ENCODE measurements at regions of chr11 and their contacts with region 1.

Region 1: GRCh38 chr11:86456052-86456939 is 81.6 kb downstream of the CCDC81 start:
- DNase-seq: peak; percentile 87
- H3K4me3 ChIP-seq: no peak overlapping the region
- H3K27ac ChIP-seq: peak overlapping the region in 1 of 2 donors; percentile 37
- H3K4me1 ChIP-seq: no peaks in the 10 kb centered on the region
- H3K27me3 ChIP-seq: no peaks in the 10 kb centered on the region
- CTCF ChIP-seq: peak; percentile 70 to 92 (median 86)
- POLR2A ChIP-seq: no peak

Region 2: DNA sequence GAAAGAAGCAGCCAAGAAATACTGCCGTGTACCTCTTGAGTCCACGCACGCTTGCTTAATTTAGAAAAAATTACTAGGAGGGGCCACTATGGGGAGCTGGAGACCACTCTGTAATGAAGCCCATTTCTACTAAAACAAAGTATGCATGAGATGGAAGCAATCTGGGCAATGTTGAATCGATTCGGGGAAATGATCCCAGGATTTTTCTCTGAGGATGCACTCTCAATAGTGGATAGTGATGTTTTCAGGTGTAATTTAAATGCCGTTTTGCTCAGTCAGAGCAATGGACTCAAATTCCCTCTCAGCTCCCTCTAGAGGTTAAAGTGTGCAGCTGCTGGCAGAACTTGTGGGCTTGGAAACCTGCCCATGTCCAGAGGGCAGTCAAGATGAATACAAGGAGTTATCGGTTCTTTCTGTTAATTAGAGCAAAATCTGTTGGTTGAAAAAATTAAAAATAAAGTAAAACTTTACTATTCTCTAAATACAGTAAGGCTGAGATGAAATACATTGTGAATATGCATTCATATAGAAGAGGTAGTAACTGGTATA is 152.0 kb after region 1 on chr11:
- intact Hi-C with region 1: loop called (anchors 5 kb)
- DNase-seq: peak; percentile 49
- H3K4me3 ChIP-seq: no peak overlapping the region
- H3K27ac ChIP-seq: no peak overlapping the region
- H3K4me1 ChIP-seq: no peaks in the 10 kb centered on the region
- H3K27me3 ChIP-seq: no peaks in the 10 kb centered on the region
- CTCF ChIP-seq: peak; percentile 76 to 84 (median 78)
- POLR2A ChIP-seq: no peak

Region 3: DNA sequence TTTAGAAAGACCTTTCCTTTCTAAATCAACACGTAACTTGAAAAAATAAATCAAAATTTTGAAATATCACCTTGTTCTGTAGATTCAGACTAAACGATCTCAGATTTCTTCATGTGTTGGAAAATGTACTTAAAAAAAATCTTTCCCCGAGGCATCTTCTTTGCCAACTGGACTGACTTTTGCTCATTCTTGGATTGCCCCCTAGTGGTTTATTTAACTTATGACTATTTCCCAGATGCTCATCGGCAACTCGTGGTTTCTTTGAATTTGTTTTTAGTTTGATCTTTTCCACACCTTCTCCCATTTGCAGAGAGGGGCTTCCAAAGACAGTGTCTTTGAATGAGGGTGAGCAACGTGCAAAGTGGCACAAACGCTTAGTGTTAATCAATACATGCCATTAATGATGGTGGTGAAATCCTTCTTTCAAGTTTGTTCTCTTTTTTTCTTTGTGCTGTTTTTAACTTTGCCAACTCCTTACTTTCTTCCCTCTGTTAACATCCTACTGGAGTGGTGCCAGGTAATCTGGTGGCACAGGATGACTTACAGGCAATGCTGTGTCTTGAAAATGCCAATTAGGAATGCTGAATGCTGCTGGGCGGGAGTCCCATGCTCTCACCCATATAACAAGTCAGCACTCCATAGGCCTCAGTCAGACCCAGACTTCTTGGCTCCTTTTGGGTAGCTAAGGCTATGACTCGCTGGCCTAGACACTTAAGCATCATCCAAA is 362.3 kb after region 1 on chr11:
- intact Hi-C with region 1: loop called (anchors 1 kb)
- DNase-seq: peak; percentile 31
- H3K4me3 ChIP-seq: no peak overlapping the region
- H3K27ac ChIP-seq: no peak overlapping the region
- H3K4me1 ChIP-seq: no peaks in the 10 kb centered on the region
- H3K27me3 ChIP-seq: no peaks in the 10 kb centered on the region
- CTCF ChIP-seq: peak; percentile 62 to 88 (median 83)
- POLR2A ChIP-seq: no peak

Region 4: GRCh38 chr11:86919557-86920210 is 463.4 kb after region 1 on chr11:
- intact Hi-C with region 1: loop called (anchors 2 kb)
- DNase-seq: no peak
- H3K4me3 ChIP-seq: no peak overlapping the region
- H3K27ac ChIP-seq: no peak overlapping the region
- H3K4me1 ChIP-seq: no peaks in the 10 kb centered on the region
- H3K27me3 ChIP-seq: no peaks in the 10 kb centered on the region
- CTCF ChIP-seq: peak in 3 of 4 experiments; percentile 46 to 66 (median 58)
- POLR2A ChIP-seq: no peak

Measured in prostate gland (tissue), 2 donors.